GM12878 (cell line): ENCODE measurements at regions of chr16 and their contacts with region 1.

Region 1: GRCh38 chr16:50747207-50747956 is 5.5 kb downstream of the CYLD start:
- DNase-seq: peak; percentile 57
- ATAC-seq: peak; percentile 73
- H3K4me3 ChIP-seq: peak overlapping the region; percentile 62; the same call in 1 of the 2 replicates
- H3K27ac ChIP-seq: peak overlapping the region; percentile 75
- H3K4me1 ChIP-seq: peaks cover 20% of the 10 kb centered on the region
- H3K27me3 ChIP-seq: no peaks in the 10 kb centered on the region
- CTCF ChIP-seq: peak; percentile 37 to 68 (median 59); a peak in 5 of 6 replicates
- EP300 ChIP-seq: no peak
- POLR2A ChIP-seq: no peak
- RAD21 ChIP-seq: peak; percentile 79

Region 2: DNA sequence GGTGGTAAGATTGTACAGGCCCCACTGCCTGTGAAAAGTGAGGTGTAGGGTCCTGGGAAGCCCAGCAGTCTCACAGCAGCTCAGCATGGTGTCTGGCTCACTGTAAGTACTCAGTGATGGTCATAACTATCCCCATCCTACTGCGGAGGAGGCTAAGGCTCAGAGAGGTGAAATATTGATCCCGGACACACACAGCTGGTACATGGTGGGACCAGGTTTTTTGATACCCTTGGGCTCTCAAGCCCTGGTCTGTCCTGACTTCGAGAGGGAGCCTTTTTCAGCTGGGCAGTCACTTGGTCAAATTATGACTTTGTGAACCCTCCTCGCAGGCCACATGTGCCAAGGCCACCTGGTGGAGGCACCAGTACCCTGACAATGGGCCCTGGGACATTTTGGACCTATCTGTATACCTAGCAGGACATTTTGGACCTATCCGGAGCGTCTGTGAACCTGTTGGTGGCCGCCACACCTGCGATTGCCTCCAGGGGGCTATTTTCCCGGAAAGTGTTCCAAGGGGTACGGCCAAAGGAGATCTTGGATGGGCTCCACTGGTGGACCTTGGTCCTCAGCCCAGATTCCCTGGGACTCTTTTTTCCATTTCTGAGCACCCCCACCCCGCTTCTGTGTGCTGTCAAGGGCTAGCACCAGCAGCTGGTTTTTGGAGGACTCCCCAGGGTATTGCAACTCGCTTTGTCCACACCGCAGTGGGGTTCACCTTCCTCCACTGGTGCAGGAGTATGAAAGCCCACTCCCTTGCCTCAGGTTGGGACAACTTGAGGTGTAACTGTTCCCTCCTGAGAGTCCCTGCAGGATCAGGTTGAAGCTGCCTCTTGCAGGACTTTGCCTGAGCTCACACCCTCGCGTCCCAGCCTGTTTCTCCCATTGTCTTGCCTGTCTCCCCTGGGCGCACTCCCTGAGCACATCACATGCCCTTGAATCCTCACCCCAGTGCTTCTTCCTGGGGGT is 282.8 kb before region 1 on chr16:
- CTCF ChIA-PET with region 1: no interaction called
- POLR2A ChIA-PET with region 1: no interaction called
- RAD21 ChIA-PET with region 1: no interaction called
- SMC1A ChIA-PET with region 1: no interaction called
- in situ Hi-C with region 1: no loop called
- intact Hi-C with region 1: loop called (anchors 5 kb)
- DNase-seq: no peak
- ATAC-seq: no peak
- H3K4me3 ChIP-seq: no peak overlapping the region
- H3K27ac ChIP-seq: no peak overlapping the region
- H3K4me1 ChIP-seq: peaks cover 21% of the 10 kb centered on the region
- H3K27me3 ChIP-seq: peaks cover 0 to 4% of the 10 kb centered on the region in 2 experiments; a peak in 2 of 4 replicates
- CTCF ChIP-seq: peak in 1 of 3 experiments; percentile 3; a peak in 1 of 6 replicates
- EP300 ChIP-seq: no peak
- POLR2A ChIP-seq: no peak
- RAD21 ChIP-seq: no peak

Region 3: GRCh38 chr16:50611332-50611934 is 135.9 kb before region 1 on chr16:
- CTCF ChIA-PET with region 1: interaction called, 14 read pairs
- POLR2A ChIA-PET with region 1: no interaction called
- RAD21 ChIA-PET with region 1: interaction called, 3 read pairs
- SMC1A ChIA-PET with region 1: interaction called, 4 read pairs
- in situ Hi-C with region 1: no loop called
- intact Hi-C with region 1: no loop called
- DNase-seq: no peak
- ATAC-seq: peak; percentile 58
- H3K4me3 ChIP-seq: no peak overlapping the region
- H3K27ac ChIP-seq: no peak overlapping the region
- H3K4me1 ChIP-seq: peaks cover 3% of the 10 kb centered on the region; the same call in 1 of the 2 replicates
- H3K27me3 ChIP-seq: no peaks in the 10 kb centered on the region
- CTCF ChIP-seq: 0 out of 6 replicates have a peak, but pooled peaks of 2 of the 3 experiments have one; percentile 2 to 12
- EP300 ChIP-seq: no peak
- POLR2A ChIP-seq: no peak
- RAD21 ChIP-seq: no peak

Region 4: GRCh38 chr16:50696575-50697420 is 50.6 kb before region 1 on chr16:
- CTCF ChIA-PET with region 1: interaction called, 63 read pairs
- POLR2A ChIA-PET with region 1: interaction called, 104 read pairs
- RAD21 ChIA-PET with region 1: interaction called, 112 read pairs
- SMC1A ChIA-PET with region 1: interaction called, 59 read pairs
- in situ Hi-C with region 1: no loop called
- intact Hi-C with region 1: loop called (anchors 2 kb)
- DNase-seq: peak; percentile 82
- ATAC-seq: peak; percentile 76
- H3K4me3 ChIP-seq: peak overlapping the region; percentile 72; the same call in 1 of the 2 replicates
- H3K27ac ChIP-seq: peak overlapping the region; percentile 95
- H3K4me1 ChIP-seq: peaks cover 57% of the 10 kb centered on the region
- H3K27me3 ChIP-seq: no peaks in the 10 kb centered on the region
- CTCF ChIP-seq: no peak
- EP300 ChIP-seq: peak in 1 of 2 experiments; percentile 30; a peak in 2 of 4 replicates
- POLR2A ChIP-seq: 0 out of 2 replicates have a peak, but pooled peaks have one; percentile 47
- RAD21 ChIP-seq: no peak

Region 5: GRCh38 chr16:50735629-50736122 is 11.7 kb before region 1 on chr16:
- CTCF ChIA-PET with region 1: interaction called, 38 read pairs
- POLR2A ChIA-PET with region 1: interaction called, 21 read pairs
- RAD21 ChIA-PET with region 1: interaction called, 56 read pairs
- SMC1A ChIA-PET with region 1: interaction called, 54 read pairs
- in situ Hi-C with region 1: no loop called
- intact Hi-C with region 1: no loop called
- DNase-seq: peak; percentile 81
- ATAC-seq: peak; percentile 74
- H3K4me3 ChIP-seq: no peak overlapping the region
- H3K27ac ChIP-seq: peak overlapping the region; percentile 55
- H3K4me1 ChIP-seq: peaks cover 26% of the 10 kb centered on the region
- H3K27me3 ChIP-seq: no peaks in the 10 kb centered on the region
- CTCF ChIP-seq: no peak
- EP300 ChIP-seq: peak; percentile 68 to 83; a peak in 3 of 4 replicates
- POLR2A ChIP-seq: no peak
- RAD21 ChIP-seq: no peak

Region 6: GRCh38 chr16:51024703-51025102 is 277.3 kb after region 1 on chr16:
- CTCF ChIA-PET with region 1: no interaction called
- POLR2A ChIA-PET with region 1: no interaction called
- RAD21 ChIA-PET with region 1: no interaction called
- SMC1A ChIA-PET with region 1: no interaction called
- in situ Hi-C with region 1: no loop called
- intact Hi-C with region 1: no loop called
- DNase-seq: no peak
- ATAC-seq: no peak
- H3K4me3 ChIP-seq: no peak overlapping the region
- H3K27ac ChIP-seq: no peak overlapping the region
- H3K4me1 ChIP-seq: no peaks in the 10 kb centered on the region
- H3K27me3 ChIP-seq: no peaks in the 10 kb centered on the region
- CTCF ChIP-seq: no peak
- EP300 ChIP-seq: no peak
- POLR2A ChIP-seq: no peak
- RAD21 ChIP-seq: no peak